IMR-90 (cell line): ENCODE measurements at regions of chr11 and their contacts with region 1.

Region 1: GRCh38 chr11:111938687-111939160 is 1.6 kb downstream of the DIXDC1 start:
- DNase-seq: peak; percentile 63
- ATAC-seq: peak; percentile 40
- H3K4me3 ChIP-seq: peak overlapping the region; percentile 1; the same call in 1 of the 2 replicates
- H3K27ac ChIP-seq: peak overlapping the region; percentile 53
- H3K4me1 ChIP-seq: peaks cover 28% of the 10 kb centered on the region
- H3K27me3 ChIP-seq: no peaks in the 10 kb centered on the region
- CTCF ChIP-seq: no peak
- POLR2A ChIP-seq: peak; percentile 44; the same call in 1 of the 2 replicates
- RAD21 ChIP-seq: no peak

Region 2: GRCh38 chr11:112086422-112087191 is 147.9 kb after region 1 on chr11 and contains the starts of genes SDHD and TIMM8B:
- CTCF ChIA-PET with region 1: no interaction called
- POLR2A ChIA-PET with region 1: no interaction called
- dilution Hi-C with region 1: no loop called
- in situ Hi-C with region 1: no loop called
- intact Hi-C with region 1: loop called (anchors 5 kb)
- DNase-seq: peak; percentile 96
- ATAC-seq: peak; percentile 92
- H3K4me3 ChIP-seq: peak within 1 kb of the TSS; percentile 78
- H3K27ac ChIP-seq: peak within 1 kb of the TSS; percentile 84
- H3K4me1 ChIP-seq: peaks cover 2% of the 10 kb centered on the region; the same call in 1 of the 2 replicates
- H3K27me3 ChIP-seq: no peaks in the 10 kb centered on the region
- CTCF ChIP-seq: peak; percentile 44
- POLR2A ChIP-seq: peak; percentile 73
- RAD21 ChIP-seq: peak; percentile 45
- total RNA-seq, gene SDHD: 83.2 and 130 TPM in 2 replicates
- total RNA-seq, gene TIMM8B: 35.5 and 48.9 TPM in 2 replicates